Lower leg skin (tissue), 4 donors: ENCODE measurements at regions of chr12 and their contacts with region 1.

Region 1: DNA sequence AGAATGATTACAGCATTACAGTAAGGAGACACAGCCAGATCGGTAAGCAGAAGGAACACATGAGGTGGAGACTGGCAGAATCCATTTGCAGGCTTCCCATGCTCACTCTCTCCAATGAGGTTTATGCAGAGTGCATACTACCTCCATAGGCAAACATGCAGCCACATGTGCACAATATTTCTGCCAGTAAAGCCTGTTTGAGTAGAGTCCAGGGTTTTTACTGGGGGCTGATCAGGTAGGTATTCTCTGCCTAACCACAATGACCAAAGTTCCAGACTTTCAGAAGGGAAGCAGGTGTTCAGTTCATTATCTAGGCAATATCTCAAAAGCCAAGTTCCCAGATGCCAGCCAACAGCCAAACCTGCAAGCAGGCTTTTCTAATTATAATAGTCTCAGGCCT is 31.1 kb downstream of the INTS13 start:
- DNase-seq: no peak
- H3K4me3 ChIP-seq: no peak overlapping the region
- CTCF ChIP-seq: no peak
- POLR2A ChIP-seq: no peak

Region 2: DNA sequence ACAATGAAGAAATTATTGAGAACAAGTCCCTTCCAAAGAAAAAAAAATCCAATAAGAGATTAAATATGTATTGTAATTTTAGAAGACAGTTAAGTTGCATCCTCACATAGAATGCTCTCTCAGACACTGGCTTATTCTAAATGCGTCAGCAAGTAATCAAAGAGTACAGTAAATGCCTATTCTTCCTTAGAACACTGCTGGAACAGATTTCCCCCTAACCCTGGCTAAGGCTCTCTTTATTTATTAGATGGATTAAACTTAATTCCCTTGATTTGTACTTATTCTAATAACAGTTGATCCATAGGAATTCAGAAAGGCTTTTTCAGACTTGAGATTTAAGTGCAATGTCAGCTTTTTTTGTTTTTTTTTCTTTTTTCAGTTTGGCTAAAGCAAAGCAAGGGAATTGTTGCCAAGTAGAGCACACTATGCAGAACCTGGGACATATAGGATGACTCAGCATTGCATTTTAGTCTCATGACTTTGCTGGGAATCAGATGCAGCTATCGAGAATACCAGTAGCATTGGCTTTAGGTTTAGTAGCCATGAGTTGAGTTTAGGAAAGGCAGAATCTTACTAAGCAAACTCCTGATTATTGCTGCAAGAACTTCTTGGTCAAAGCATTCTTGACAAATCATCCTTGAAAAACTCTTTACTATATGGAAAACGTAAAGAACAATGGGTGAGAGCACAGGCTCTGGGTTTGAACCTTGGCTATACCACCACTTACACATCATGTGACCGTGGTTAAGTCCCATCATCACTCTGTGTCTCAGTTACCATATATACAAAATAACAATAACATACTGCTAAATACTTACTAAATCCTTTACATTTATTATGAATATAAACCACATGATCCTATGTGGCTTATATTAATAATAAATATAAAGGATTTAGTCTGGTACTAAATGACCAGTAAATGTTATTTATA is 142.4 kb after region 1 on chr12:
- intact Hi-C with region 1: no loop called
- DNase-seq: no peak
- H3K4me3 ChIP-seq: no peak overlapping the region
- CTCF ChIP-seq: no peak
- POLR2A ChIP-seq: no peak

Region 3: DNA sequence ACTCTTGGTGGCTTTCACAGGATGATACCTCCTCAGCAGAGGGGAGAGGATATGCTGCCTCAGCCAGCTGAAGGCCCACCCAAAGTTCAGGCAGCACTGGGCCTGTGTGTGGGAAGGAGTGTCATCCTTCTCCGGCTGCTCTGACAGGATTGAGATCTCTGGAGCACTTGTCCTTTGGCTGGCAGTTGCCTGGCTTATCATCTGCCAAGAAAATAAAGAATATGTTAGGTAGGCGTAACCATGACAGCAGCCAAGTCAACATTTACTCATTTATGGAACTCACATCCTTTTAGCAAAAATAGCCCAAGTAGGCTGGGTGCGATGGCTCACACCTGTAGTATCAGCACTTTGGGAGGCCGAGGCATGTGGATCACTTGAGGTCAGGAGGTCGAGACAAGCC is 685.8 kb after region 1 on chr12:
- intact Hi-C with region 1: loop called (anchors 5 kb)
- DNase-seq: peak in 1 of 2 donors; percentile 64
- H3K4me3 ChIP-seq: no peak overlapping the region
- CTCF ChIP-seq: no peak
- POLR2A ChIP-seq: no peak